AG04449 (cell line): ENCODE measurements at regions of chr22 and their contacts with region 1.

Region 1: GRCh38 chr22:46006379-46007002 is 29.5 kb upstream of the WNT7B start:
- DNase-seq: peak; percentile 42
- H3K4me3 ChIP-seq: 0 out of 2 replicates have a peak overlapping the region, but pooled peaks have one; percentile 8
- CTCF ChIP-seq: peak; percentile 91

Region 2: GRCh38 chr22:45616432-45616831 is 390.1 kb before region 1 on chr22:
- CTCF ChIA-PET with region 1: no interaction called
- POLR2A ChIA-PET with region 1: no interaction called
- DNase-seq: no peak
- H3K4me3 ChIP-seq: no peak overlapping the region
- CTCF ChIP-seq: no peak

Region 3: DNA sequence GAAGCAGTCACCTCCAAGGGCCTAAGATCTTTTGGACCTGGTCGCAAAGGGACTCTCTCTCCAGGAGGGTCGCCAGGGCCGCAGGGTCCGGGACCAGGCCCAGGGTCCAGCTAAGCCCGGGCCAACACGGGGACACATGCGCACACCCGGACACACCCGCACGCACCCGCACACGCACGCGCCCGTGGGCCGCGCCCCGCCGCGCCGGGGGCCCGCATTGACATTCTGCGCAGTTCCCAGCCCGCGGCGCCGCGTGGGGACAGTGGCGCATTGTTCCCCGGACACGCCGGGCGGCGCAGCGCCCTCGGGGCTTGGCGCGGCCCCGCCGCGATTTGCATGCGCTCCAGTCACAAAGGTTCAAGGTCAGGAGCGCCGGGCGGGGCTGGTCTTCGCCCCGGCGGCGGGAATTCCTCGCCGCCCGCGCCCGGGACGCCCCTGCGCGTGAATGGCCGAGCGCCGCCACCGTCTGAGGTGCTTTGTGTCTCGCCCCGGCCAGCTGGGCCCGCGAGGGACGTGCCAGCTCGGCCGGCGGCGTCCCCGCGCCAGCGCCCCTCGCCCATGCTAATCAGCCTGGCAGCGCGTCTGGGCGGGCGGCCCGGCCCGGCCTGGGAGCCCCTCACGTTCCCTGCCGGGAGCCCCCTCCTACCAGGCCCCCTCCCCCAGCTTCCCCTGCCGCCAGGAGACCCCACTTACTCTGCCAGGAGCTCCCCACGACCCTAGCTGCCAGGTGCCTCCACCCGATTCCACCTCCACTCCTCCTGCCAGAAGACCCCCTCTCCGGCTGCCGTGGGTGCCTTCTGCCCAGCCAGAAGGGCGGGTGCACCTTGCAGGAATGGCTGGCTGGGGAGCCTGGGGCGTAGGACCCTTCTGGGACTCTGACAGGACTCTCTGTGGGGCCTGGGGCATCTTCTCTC is 21.0 kb after region 1 on chr22:
- CTCF ChIA-PET with region 1: interaction called, 29 read pairs
- POLR2A ChIA-PET with region 1: no interaction called
- DNase-seq: no peak
- H3K4me3 ChIP-seq: peak overlapping the region; percentile 8
- CTCF ChIP-seq: no peak

Region 4: GRCh38 chr22:46071451-46072109 is 65.1 kb after region 1 on chr22:
- CTCF ChIA-PET with region 1: interaction called, 50 read pairs
- POLR2A ChIA-PET with region 1: interaction called, 5 read pairs
- DNase-seq: peak; percentile 53
- H3K4me3 ChIP-seq: peak overlapping the region; percentile 77
- CTCF ChIP-seq: no peak

Region 5: DNA sequence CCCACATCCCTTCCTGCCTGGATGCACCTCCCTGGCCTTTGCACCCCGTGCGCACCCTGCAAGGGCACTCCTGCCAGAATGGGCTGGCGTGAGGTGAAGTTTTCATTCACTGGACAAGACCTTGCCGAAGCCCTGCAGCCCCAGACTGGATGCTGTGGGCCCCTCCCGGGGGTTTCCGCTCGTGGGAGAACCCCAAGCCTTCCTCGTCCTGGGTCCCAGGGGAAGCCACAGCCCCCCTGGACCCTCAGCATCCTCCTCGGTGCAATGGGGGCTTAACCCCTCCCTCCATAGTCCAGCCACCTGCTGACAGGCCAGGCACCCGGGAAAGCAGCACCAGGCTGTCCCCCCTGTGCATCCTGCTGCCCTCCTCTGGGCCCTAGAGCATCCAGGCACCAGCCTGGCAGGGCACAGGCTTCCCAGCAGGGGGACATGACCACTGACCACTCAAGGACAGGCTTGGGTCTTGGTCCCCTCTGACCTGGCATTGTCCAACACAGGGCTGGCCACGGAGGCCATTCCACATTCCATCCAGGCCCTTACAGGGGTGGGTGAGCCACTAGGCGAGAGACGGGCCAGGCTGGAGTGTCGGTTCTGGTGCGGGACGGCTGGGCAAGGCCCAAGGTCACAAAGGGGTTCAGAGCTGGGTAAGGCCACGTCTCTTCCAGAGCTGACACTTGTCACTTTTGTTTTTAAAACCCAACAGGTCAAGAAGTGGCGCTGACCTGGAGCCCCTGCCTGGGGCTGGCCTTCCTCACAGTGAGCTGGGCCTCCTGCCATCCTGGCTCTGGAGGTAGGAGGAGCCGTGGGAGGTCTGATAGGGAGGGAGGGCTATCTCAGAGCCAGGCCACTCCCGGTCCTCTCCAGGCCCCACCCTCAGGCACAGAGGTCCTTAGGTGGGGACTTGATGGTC is 102.3 kb after region 1 on chr22:
- CTCF ChIA-PET with region 1: interaction called, 345 read pairs
- POLR2A ChIA-PET with region 1: no interaction called
- DNase-seq: no peak
- H3K4me3 ChIP-seq: no peak overlapping the region
- CTCF ChIP-seq: no peak

Region 6: DNA sequence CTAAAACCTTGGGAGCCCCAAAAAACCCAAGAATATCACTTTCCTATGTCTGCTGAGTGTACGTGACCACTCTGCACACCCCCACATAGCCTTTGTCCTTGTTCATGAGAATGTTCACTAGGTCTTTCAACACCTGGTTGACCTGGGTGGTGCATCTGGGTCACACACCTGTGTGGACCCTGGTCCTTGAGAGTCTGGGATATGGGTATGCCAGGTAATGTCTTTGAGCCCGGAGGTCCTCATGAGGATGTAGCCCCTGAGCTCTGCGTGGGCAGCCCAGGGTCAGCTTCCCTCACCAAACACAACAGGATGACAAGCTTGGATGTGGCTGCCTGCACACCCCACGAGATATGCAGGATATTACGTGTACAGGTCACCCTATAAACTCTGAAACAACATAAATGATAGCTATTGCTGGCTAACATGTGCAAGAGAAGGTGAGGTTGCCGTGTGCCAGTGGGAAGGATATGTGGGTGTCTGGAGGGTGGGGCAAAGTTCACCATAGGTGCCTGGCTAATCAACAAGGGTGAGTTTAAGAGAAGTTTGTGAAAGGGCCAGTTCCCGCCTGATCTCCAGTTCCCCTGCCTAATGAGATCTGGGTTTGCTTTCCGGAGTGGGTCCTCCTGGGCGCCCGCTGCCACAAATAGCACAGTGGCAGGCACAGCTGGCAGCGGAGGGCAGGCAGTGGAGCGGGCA is 142.5 kb after region 1 on chr22:
- CTCF ChIA-PET with region 1: interaction called, 10 read pairs
- POLR2A ChIA-PET with region 1: no interaction called
- DNase-seq: no peak
- H3K4me3 ChIP-seq: peak overlapping the region; percentile 81
- CTCF ChIP-seq: no peak

Region 7: GRCh38 chr22:46320166-46320710 is 313.7 kb after region 1 on chr22:
- CTCF ChIA-PET with region 1: interaction called, 29 read pairs
- POLR2A ChIA-PET with region 1: no interaction called
- DNase-seq: no peak
- H3K4me3 ChIP-seq: no peak overlapping the region
- CTCF ChIP-seq: no peak